ENCODE measurements at regions of chr11 and their contacts with region 1.

Region 1: GRCh38 chr11:64341851-64342791 is 2.1 kb downstream of the CCDC88B start:
- DNase-seq: peak; percentile 97
- ATAC-seq: peak; percentile 67
- H3K4me3 Mint-ChIP-seq: peak overlapping the region; percentile 94
- H3K27ac Mint-ChIP-seq: peak overlapping the region; percentile 61
- H3K4me1 Mint-ChIP-seq: peaks cover 41% of the 10 kb centered on the region
- H3K27me3 Mint-ChIP-seq: no peaks in the 10 kb centered on the region

Region 2: DNA sequence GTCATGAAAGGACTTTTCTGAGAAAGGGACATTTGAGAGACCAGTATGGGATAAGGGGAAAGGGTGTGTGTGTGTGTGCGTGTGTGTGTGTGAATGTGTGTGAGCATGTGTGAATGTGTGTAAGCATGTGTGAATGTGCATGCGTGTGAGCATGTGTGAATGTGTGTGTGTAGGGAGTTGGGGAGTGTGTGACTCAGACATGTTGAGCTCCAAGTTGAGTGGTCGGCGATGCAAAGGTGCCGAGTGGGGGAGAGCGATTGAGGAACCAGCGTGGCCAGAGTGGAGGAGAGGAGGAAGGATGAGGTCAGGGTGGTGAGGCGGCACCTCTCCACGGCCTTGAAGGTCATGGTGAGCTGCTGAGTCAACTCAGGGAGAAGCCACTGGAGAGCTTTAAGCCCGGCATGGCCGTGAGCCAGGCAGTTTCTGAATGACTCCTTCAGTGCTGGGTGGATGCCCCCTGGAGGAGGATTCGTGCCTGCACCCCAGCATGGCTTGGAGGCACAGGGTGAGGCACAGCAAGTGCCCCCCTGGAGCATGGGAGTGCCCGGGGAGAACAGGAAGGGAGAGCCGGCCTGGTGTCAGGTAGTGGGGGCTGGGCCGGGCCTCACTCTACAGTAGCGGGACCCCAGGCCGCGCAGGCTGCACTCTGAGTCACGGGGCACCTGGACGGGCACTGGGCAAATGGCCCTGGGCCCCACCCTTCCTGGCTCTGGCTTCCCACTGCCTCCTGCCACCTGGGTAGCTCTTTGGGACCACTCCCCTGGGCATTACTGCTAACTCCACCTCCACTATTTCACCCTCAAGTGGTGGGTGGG is 10.4 kb before region 1 on chr11:
- POLR2A ChIA-PET with region 1: interaction called, 13 read pairs
- DNase-seq: peak; percentile 80
- ATAC-seq: peak; percentile 93
- H3K4me3 Mint-ChIP-seq: peak overlapping the region; percentile 53
- H3K27ac Mint-ChIP-seq: peak overlapping the region; percentile 93
- H3K4me1 Mint-ChIP-seq: peaks cover 17% of the 10 kb centered on the region
- H3K27me3 Mint-ChIP-seq: peaks cover 2% of the 10 kb centered on the region

Region 3: DNA sequence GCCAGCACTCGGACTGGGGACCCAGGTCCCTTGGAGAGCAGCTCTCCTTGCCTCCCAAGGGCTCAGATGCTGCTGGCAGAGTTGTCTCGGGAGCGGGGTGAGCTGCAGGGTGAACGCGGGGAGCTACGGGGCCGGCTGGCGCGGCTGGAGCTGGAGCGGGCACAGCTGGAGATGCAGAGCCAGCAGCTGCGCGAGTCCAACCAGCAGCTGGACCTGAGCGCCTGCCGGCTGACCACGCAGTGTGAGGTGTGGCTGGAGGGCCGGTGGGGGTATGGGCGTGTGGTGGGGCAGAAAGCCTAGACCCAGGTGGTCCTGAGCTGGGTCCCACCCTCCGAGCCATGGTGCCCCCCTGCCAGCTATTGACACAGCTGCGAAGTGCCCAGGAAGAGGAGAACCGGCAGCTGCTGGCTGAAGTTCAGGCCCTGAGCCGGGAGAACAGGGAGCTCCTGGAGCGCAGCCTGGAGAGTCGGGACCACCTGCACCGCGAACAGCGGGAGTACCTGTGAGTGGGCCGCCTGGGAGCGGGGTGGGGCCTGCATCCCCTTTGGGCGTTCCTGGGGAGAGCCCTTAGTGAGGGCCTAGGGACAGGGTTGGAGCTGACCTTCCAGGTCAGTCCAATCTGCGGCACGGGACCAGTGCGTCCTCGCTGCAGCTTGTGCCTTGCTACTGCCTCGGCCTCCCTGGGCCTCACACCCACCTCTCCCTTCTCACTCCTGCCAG is 11.0 kb after region 1 on chr11:
- POLR2A ChIA-PET with region 1: interaction called, 11 read pairs
- DNase-seq: no peak
- ATAC-seq: no peak
- H3K4me3 Mint-ChIP-seq: no peak overlapping the region
- H3K27ac Mint-ChIP-seq: no peak overlapping the region
- H3K4me1 Mint-ChIP-seq: peaks cover 8% of the 10 kb centered on the region
- H3K27me3 Mint-ChIP-seq: no peaks in the 10 kb centered on the region

Region 4: GRCh38 chr11:64810271-64810890 is 468.3 kb after region 1 on chr11 and contains the start of gene MEN1:
- POLR2A ChIA-PET with region 1: no interaction called
- DNase-seq: peak; percentile 86
- ATAC-seq: peak; percentile 89
- H3K4me3 Mint-ChIP-seq: peak within 1 kb of the TSS; percentile 95
- H3K27ac Mint-ChIP-seq: peak within 1 kb of the TSS; percentile 90
- H3K4me1 Mint-ChIP-seq: peaks cover 16% of the 10 kb centered on the region
- H3K27me3 Mint-ChIP-seq: no peaks in the 10 kb centered on the region
- total RNA-seq, gene MEN1: 37.4 to 39.0 TPM